ENCODE measurements at regions of chr10 and their contacts with region 1.

Region 1: DNA sequence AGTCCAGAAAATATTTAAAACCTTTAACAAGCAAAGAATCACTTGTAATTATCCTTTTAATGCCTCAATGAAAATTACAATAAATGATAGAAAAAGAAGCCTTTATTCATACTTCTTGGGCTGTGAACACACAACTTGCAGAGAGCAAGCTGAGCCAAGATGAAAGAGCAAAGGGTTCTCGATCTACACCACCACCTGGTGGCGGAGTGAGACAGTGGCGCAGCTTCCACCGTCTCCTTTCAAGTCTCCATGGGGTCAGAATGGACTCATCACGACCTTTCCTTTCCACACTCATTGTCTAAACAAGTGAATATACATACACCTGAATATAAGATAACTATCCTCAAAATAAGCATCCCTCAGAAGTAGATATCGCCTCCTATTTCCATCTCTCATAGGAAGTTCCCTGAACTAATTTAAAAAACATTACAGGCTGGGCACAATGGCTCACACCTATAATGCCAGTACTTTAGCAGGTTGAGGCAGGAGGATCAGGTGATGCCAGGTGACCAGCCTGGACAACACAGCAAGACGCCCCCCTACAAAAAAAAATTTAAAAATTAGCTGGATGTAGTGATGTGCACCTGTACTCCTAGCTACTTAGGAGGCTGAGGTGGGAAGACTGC is 40.7 kb downstream of the ATE1 start:
- DNase-seq: peak; percentile 48 to 75 (median 68)
- H3K4me3 ChIP-seq: no peak overlapping the region
- H3K27ac ChIP-seq: no peak overlapping the region
- H3K4me1 ChIP-seq: no peaks in the 10 kb centered on the region
- H3K27me3 ChIP-seq: no peaks in the 10 kb centered on the region

Region 2: DNA sequence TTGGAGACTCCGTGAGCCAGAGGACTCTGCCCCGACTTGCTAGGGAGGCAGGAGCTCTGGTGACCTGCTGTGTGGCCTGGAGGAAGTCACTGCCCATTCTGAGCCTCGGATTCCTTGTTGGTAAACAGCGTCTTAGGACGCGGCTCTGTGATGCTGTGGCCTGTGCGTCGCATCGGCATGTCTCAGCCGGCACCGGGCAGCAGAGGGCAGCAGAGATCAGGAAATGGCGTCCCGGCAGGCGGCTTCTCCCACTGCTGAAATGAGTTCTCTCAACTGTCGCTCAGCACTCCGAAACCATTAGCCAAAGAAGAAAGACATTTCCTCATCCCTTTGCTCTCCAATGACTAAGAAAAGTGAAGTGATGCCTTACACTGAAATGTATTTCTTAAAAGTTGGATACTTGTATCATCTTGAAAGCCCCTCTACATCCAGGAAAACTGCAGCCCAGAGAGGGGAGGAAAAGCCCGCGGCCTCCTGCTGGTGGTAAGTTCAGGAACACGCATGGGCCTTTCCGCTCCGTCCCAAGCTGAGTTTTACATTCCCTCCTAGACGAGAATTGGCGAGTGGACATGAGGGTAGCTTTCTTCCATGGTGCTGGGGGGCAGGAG is 944.2 kb before region 1 on chr10:
- CTCF ChIA-PET with region 1: interaction called, 16 read pairs
- POLR2A ChIA-PET with region 1: no interaction called
- DNase-seq: peak; percentile 72 to 86 (median 85)
- H3K4me3 ChIP-seq: peak overlapping the region in 2 of 7 experiments; percentile 20 to 43
- H3K27ac ChIP-seq: no peak overlapping the region
- H3K4me1 ChIP-seq: peaks cover 0 to 4% (median 2%) of the 10 kb centered on the region in 4 experiments
- H3K27me3 ChIP-seq: peaks cover 0 to 3% (median 0%) of the 10 kb centered on the region in 5 experiments

Region 3: DNA sequence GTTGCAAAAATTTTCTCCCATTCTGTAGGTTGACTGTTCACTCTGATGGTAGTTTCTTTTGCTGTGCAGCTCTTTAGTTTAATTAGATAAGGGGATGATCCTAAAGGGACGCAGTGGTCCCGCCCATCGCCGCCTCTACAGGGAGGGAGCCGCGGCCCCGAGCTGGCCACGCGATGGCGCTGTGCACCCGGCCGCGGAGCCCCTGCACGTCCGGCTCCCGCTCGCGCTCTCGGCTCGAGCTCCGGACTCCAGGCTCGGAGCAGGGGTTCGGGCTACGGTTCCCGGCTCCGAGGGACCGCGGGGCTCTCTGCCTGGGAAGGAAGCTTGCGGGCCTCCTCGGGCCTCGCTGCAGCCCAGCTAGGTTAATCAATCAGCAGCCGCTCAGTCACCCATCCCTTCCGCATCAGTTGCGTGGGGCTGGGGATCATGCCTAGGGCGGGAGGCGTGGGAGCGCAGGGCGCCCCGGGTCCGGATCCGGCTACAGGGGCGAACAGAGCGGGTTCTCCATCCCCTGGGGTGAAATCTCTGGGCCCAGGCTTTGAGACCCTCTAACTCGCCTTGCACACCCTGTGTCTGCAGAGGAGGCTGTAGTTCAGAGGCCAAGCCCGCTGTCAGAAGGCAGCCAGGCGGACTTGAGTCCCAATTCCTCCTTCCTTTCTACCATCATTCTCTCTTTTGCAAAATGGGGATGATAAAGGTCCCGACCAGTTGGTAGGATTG is 938.1 kb before region 1 on chr10:
- CTCF ChIA-PET with region 1: interaction called, 18 read pairs
- POLR2A ChIA-PET with region 1: no interaction called
- DNase-seq: peak; percentile 62 to 81 (median 80)
- H3K4me3 ChIP-seq: peak overlapping the region; percentile 30 to 78 (median 61)
- H3K27ac ChIP-seq: no peak overlapping the region
- H3K4me1 ChIP-seq: peaks cover 0 to 13% (median 10%) of the 10 kb centered on the region in 4 experiments
- H3K27me3 ChIP-seq: peaks cover 5 to 48% (median 26%) of the 10 kb centered on the region in 5 experiments

Region 4: GRCh38 chr10:121648059-121648458 is 239.1 kb before region 1 on chr10:
- CTCF ChIA-PET with region 1: no interaction called
- POLR2A ChIA-PET with region 1: no interaction called
- DNase-seq: no peak
- H3K4me3 ChIP-seq: no peak overlapping the region
- H3K27ac ChIP-seq: no peak overlapping the region
- H3K4me1 ChIP-seq: no peaks in the 10 kb centered on the region
- H3K27me3 ChIP-seq: peaks cover 0 to 18% (median 4%) of the 10 kb centered on the region in 5 experiments

Region 5: DNA sequence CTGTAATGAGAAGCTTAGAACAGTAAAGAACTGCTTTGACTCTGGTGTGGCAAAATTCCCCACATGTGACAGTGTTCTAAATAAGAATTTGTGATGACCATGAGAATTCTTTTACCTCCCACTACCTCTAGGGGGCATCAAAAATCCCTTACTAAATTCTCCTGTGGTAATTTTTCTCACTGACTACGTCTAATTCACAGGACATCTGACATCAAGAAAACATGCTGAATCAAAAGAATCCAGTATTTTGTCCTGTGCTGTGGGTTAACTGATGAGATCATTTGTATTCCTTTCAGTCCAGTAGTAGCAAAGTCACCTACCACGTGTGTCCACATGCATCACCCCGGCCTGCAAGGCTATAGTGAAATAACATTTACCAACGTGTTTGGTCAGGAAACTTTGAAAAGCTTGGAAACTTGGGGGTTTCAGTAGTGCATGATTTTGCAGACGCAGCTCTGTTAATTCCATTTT is 63.1 kb before region 1 on chr10:
- CTCF ChIA-PET with region 1: interaction called, 18 read pairs
- POLR2A ChIA-PET with region 1: no interaction called
- DNase-seq: peak; percentile 31 to 63 (median 57)
- H3K4me3 ChIP-seq: no peak overlapping the region
- H3K27ac ChIP-seq: no peak overlapping the region
- H3K4me1 ChIP-seq: no peaks in the 10 kb centered on the region
- H3K27me3 ChIP-seq: no peaks in the 10 kb centered on the region

Region 6: GRCh38 chr10:121900443-121901174 is 13.5 kb after region 1 on chr10:
- CTCF ChIA-PET with region 1: interaction called, 29 read pairs
- POLR2A ChIA-PET with region 1: no interaction called
- DNase-seq: peak; percentile 55 to 73 (median 70)
- H3K4me3 ChIP-seq: no peak overlapping the region
- H3K27ac ChIP-seq: no peak overlapping the region
- H3K4me1 ChIP-seq: peaks cover 0 to 2% (median 0%) of the 10 kb centered on the region in 4 experiments
- H3K27me3 ChIP-seq: no peaks in the 10 kb centered on the region

Region 7: GRCh38 chr10:121910673-121911420 is 23.7 kb after region 1 on chr10:
- CTCF ChIA-PET with region 1: no interaction called
- POLR2A ChIA-PET with region 1: no interaction called
- DNase-seq: peak in 2 of 3 donors; percentile 44
- H3K4me3 ChIP-seq: no peak overlapping the region
- H3K27ac ChIP-seq: no peak overlapping the region
- H3K4me1 ChIP-seq: no peaks in the 10 kb centered on the region
- H3K27me3 ChIP-seq: no peaks in the 10 kb centered on the region